H1 (cell line): ENCODE measurements at regions of chr7 and their contacts with region 1.

Region 1: GRCh38 chr7:37901236-37901827 is 15.3 kb downstream of the SFRP4 start:
- DNase-seq: no peak
- H3K4me3 ChIP-seq: no peak overlapping the region
- H3K27ac ChIP-seq: no peak overlapping the region
- H3K4me1 ChIP-seq: no peaks in the 10 kb centered on the region
- H3K27me3 ChIP-seq: no peaks in the 10 kb centered on the region
- CTCF ChIP-seq: peak in 2 of 3 experiments; percentile 44 to 55; a peak in 2 of 4 replicates
- EP300 ChIP-seq: no peak
- POLR2A ChIP-seq: no peak
- RAD21 ChIP-seq: peak; percentile 74 to 76

Region 2: GRCh38 chr7:37815671-37816371 is 85.5 kb before region 1 on chr7:
- CTCF ChIA-PET with region 1: no interaction called
- POLR2A ChIA-PET with region 1: no interaction called
- DNase-seq: no peak
- H3K4me3 ChIP-seq: no peak overlapping the region
- H3K27ac ChIP-seq: no peak overlapping the region
- H3K4me1 ChIP-seq: no peaks in the 10 kb centered on the region
- H3K27me3 ChIP-seq: no peaks in the 10 kb centered on the region
- CTCF ChIP-seq: no peak
- EP300 ChIP-seq: no peak
- POLR2A ChIP-seq: no peak
- RAD21 ChIP-seq: no peak

Region 3: DNA sequence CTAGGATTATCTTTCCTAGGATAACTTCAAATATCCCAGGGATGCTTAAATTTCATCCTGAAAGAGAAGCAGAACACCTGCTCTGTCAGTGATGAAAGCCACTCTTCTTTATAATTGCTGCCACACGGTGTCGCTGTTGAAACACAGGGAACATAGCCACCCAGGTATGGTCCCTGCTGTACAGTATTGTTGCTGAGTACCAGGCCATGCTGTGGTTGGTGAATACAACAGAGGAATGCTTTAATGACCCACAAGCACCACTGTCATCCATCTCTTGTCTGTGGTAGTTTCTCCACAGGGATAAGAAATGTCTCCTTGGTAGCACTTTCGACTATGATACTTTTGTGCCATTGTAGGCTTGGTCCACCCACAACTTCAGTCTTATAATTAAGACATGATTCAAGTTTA is 206.2 kb after region 1 on chr7:
- CTCF ChIA-PET with region 1: interaction called, 13 read pairs
- POLR2A ChIA-PET with region 1: no interaction called
- DNase-seq: peak; percentile 7 to 88
- H3K4me3 ChIP-seq: no peak overlapping the region
- H3K27ac ChIP-seq: no peak overlapping the region
- H3K4me1 ChIP-seq: no peaks in the 10 kb centered on the region
- H3K27me3 ChIP-seq: no peaks in the 10 kb centered on the region
- CTCF ChIP-seq: peak; percentile 50 to 91 (median 83)
- EP300 ChIP-seq: no peak
- POLR2A ChIP-seq: no peak
- RAD21 ChIP-seq: peak; percentile 90 to 91